HAP-1 (cell line): ENCODE measurements at regions of chr6 and their contacts with region 1.

Region 1: DNA sequence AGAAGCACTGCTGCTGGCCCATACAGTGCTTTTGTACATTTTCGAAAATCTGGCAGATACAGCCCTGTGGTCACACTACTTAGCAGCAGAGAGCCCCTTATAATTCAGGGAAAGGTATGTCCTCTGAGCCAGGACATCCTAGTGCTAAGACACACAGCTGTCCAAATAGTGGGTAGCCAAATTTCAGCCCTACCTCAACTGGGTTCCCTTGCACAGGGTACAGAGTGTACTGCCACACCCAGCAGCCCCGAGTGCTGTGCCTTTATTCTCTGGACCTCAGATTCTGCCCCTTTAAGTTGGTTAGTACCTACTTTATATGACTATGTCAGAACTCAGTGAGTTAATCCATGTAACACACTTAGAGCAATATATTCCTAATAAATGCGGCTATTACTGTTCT is 47.6 kb downstream of the PRPH2 start:
- DNase-seq: no peak
- H3K4me3 ChIP-seq: no peak overlapping the region
- H3K4me1 ChIP-seq: no peaks in the 10 kb centered on the region
- H3K27me3 ChIP-seq: no peaks in the 10 kb centered on the region

Region 2: DNA sequence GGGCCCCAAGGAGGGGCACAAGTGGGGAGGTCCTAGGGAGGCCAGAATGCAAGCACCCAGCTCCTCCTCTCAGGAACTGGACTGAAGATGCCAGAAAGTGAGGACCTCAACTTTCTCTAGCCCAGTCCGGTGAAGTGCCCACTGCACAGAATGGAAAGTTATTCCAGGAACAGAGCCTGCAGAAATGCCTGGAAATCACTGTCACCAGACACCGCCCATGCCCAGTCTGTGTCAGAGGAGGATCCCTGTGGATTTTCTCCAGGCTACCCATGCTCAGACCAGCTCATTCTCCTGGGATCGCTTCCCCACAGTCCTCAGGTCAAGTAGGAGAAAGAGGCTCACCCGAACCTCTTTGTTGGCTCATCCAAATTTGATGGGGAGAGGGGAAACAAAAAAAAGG is 41.1 kb after region 1 on chr6:
- in situ Hi-C with region 1: loop called (anchors 5 kb)
- DNase-seq: no peak
- H3K4me3 ChIP-seq: no peak overlapping the region
- H3K4me1 ChIP-seq: peaks cover 6% of the 10 kb centered on the region
- H3K27me3 ChIP-seq: no peaks in the 10 kb centered on the region

Region 3: GRCh38 chr6:43274916-43275597 is 600.3 kb after region 1 on chr6:
- in situ Hi-C with region 1: no loop called
- DNase-seq: no peak
- H3K4me3 ChIP-seq: no peak overlapping the region
- H3K4me1 ChIP-seq: peaks cover 5% of the 10 kb centered on the region
- H3K27me3 ChIP-seq: no peaks in the 10 kb centered on the region